Right ventricle myocardium inferior (tissue), 1 donor: ENCODE measurements at regions of chr5 and their contacts with region 1.

Region 1: DNA sequence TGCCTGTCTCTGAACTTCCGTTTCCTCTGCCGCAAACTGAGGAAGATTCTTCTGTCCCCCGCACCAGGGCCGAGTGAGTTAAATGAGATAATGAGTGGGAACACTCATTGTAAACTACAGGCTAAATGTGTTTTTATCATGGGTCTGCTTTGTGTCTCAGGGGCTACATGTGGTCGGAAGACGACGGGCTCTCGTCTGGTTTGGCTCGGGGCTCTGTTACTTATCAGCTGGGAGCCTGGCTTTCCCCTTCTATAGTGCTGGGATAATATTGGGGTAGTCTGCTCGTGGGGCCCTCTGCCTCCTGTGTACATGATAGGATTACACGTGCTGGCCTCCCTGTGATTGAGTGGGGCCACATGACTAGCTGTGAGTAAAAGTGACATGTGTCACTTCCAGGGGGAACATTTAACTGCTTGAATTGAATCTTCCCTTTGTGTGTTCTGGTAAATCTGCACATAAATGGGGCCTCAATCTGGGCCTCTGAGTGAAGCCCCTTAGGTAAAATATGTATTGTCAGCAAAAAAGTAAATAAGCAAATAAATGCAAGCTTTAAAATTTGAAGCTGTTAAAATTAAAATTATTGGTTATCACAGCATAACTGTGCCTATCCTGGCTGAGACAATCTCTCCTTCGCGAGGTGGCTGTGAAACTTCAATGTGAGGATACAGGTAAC is 86.9 kb upstream of the SH3PXD2B start:
- DNase-seq: no peak
- ATAC-seq: no peak

Region 2: GRCh38 chr5:172603251-172603806 is 62.1 kb after region 1 on chr5:
- intact Hi-C with region 1: no loop called
- DNase-seq: no peak
- ATAC-seq: no peak

Region 3: GRCh38 chr5:173065155-173065554 is 523.9 kb after region 1 on chr5:
- intact Hi-C with region 1: loop called (anchors 5 kb)
- DNase-seq: no peak
- ATAC-seq: no peak